Caco-2 (cell line): ENCODE measurements at regions of chr12 and their contacts with region 1.

Region 1: GRCh38 chr12:53220801-53221202 is 11.2 kb downstream of the RARG start:
- DNase-seq: peak; percentile 95
- H3K4me3 ChIP-seq: peak overlapping the region; percentile 45
- H3K4me3 Mint-ChIP-seq: peak overlapping the region; percentile 97
- H3K27ac Mint-ChIP-seq: peak overlapping the region; percentile 89
- H3K4me1 ChIP-seq: peaks cover 25% of the 10 kb centered on the region
- H3K4me1 Mint-ChIP-seq: peaks cover 53% of the 10 kb centered on the region
- H3K27me3 ChIP-seq: no peaks in the 10 kb centered on the region
- H3K27me3 Mint-ChIP-seq: no peaks in the 10 kb centered on the region
- CTCF ChIP-seq: no peak

Region 2: DNA sequence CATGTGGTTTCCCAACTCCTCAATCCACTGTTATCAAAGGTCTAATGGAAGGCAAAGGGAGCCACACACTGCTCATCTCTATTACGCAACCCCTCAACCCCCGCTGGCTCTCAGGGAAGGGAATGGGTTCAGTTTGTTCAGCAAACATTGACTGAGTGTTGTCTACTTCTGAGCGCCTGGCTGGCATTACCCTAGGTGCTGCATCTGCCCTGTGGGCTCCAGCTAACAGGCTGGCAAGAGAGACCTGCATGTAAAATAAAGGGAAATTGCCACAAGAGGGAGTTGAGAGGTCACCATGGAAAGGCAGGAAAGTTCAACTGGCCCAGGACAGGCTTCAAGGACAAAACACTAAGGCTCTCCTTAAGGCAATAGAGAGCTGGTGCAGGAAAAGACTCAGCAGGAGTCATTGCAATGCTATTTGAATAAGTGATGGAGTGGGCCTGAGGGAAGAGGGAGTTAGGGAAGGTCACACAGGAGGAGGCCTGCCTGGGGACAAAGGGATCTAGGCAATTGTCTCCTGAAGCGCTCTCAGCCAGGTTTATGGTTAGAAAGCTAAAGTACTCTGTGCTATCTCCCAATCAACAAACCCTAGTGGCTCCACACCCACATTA is 45.8 kb before region 1 on chr12:
- CTCF ChIA-PET with region 1: no interaction called
- POLR2A ChIA-PET with region 1: no interaction called
- intact Hi-C with region 1: no loop called
- DNase-seq: peak; percentile 63 to 73
- H3K4me3 ChIP-seq: no peak overlapping the region
- H3K4me3 Mint-ChIP-seq: peak overlapping the region; percentile 33
- H3K27ac Mint-ChIP-seq: peak overlapping the region; percentile 19
- H3K4me1 ChIP-seq: peaks cover 16% of the 10 kb centered on the region
- H3K4me1 Mint-ChIP-seq: peaks cover 19% of the 10 kb centered on the region
- H3K27me3 ChIP-seq: no peaks in the 10 kb centered on the region
- H3K27me3 Mint-ChIP-seq: no peaks in the 10 kb centered on the region
- CTCF ChIP-seq: peak; percentile 38 to 46

Region 3: DNA sequence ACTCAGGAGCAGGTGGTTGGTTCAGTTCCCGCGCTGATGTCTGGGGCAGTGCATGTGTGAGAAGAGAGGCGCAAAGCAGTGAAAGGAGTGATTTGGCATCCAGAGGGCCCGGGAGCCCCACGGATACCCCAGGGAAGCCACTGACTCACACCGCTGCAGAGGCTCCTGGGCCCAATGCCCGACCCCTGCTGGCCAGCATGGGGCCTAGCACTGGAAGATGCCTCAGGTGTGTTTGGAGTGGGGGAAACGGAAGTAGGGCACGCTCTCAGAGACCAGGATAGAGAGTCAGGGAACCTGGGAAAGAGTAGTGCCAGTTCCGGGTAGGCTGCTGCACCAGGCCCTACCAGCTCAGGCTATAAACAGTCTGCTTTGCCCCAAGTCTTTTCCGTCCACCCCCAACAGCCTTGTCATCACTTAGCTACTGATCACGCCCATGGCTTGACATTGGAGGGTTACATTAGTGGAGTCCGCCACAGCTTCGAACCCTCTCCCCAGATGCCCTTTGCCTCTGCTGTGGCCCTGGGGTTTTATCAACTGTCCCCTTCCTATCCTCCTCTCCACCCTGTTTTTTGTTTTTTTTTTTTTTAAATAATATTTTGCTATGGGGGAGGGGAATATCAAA is 30.6 kb before region 1 on chr12:
- CTCF ChIA-PET with region 1: no interaction called
- POLR2A ChIA-PET with region 1: no interaction called
- intact Hi-C with region 1: no loop called
- DNase-seq: peak; percentile 56 to 66
- H3K4me3 ChIP-seq: no peak overlapping the region
- H3K4me3 Mint-ChIP-seq: no peak overlapping the region
- H3K27ac Mint-ChIP-seq: no peak overlapping the region
- H3K4me1 ChIP-seq: no peaks in the 10 kb centered on the region
- H3K4me1 Mint-ChIP-seq: no peaks in the 10 kb centered on the region
- H3K27me3 ChIP-seq: no peaks in the 10 kb centered on the region
- H3K27me3 Mint-ChIP-seq: no peaks in the 10 kb centered on the region
- CTCF ChIP-seq: peak; percentile 69 to 89

Region 4: GRCh38 chr12:53251477-53252348 is 30.9 kb after region 1 on chr12:
- CTCF ChIA-PET with region 1: interaction called, 11 read pairs
- POLR2A ChIA-PET with region 1: interaction called, 3 read pairs
- intact Hi-C with region 1: loop called (anchors 1 kb)
- DNase-seq: peak; percentile 82 to 85
- H3K4me3 ChIP-seq: peak overlapping the region; percentile 81
- H3K4me3 Mint-ChIP-seq: peak overlapping the region; percentile 93
- H3K27ac Mint-ChIP-seq: peak overlapping the region; percentile 84
- H3K4me1 ChIP-seq: peaks cover 18% of the 10 kb centered on the region
- H3K4me1 Mint-ChIP-seq: peaks cover 22% of the 10 kb centered on the region
- H3K27me3 ChIP-seq: no peaks in the 10 kb centered on the region
- H3K27me3 Mint-ChIP-seq: no peaks in the 10 kb centered on the region
- CTCF ChIP-seq: peak in 1 of 2 experiments; percentile 60

Region 5: DNA sequence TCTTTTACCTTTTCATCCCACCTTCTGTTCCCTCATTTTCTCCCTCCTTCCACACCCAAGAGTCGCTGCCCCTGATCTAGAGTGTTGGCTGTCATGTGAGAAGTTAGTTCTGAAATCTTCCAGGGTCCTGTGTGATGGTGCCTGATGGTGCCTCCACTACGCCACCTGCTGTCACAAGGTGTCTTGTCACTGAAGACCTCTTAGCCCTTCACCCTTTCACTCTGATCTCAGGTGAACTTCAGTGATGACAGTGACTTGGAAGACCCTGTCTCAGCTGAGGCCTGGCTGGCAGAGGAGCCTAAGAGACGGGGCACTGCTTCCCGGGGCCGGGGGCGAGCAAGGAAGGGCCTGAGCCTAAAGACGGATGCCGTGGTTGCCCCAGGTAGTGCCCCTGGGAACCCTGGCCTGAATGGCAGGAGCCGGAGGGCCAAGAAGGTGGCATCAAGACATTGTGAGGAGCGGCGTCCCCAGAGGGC is 67.0 kb after region 1 on chr12:
- CTCF ChIA-PET with region 1: interaction called, 3 read pairs
- POLR2A ChIA-PET with region 1: interaction called, 3 read pairs
- intact Hi-C with region 1: loop called (anchors 2 kb)
- DNase-seq: peak; percentile 65 to 76
- H3K4me3 ChIP-seq: no peak overlapping the region
- H3K4me3 Mint-ChIP-seq: no peak overlapping the region
- H3K27ac Mint-ChIP-seq: no peak overlapping the region
- H3K4me1 ChIP-seq: no peaks in the 10 kb centered on the region
- H3K4me1 Mint-ChIP-seq: no peaks in the 10 kb centered on the region
- H3K27me3 ChIP-seq: no peaks in the 10 kb centered on the region
- H3K27me3 Mint-ChIP-seq: no peaks in the 10 kb centered on the region
- CTCF ChIP-seq: peak; percentile 72 to 76

Region 6: GRCh38 chr12:53308276-53308675 is 87.5 kb after region 1 on chr12:
- CTCF ChIA-PET with region 1: no interaction called
- POLR2A ChIA-PET with region 1: interaction called, 13 read pairs
- intact Hi-C with region 1: no loop called
- DNase-seq: no peak
- H3K4me3 ChIP-seq: no peak overlapping the region
- H3K4me3 Mint-ChIP-seq: no peak overlapping the region
- H3K27ac Mint-ChIP-seq: no peak overlapping the region
- H3K4me1 ChIP-seq: no peaks in the 10 kb centered on the region
- H3K4me1 Mint-ChIP-seq: no peaks in the 10 kb centered on the region
- H3K27me3 ChIP-seq: no peaks in the 10 kb centered on the region
- H3K27me3 Mint-ChIP-seq: no peaks in the 10 kb centered on the region
- CTCF ChIP-seq: no peak

Region 7: GRCh38 chr12:53391729-53392128 is 170.9 kb after region 1 on chr12:
- CTCF ChIA-PET with region 1: no interaction called
- POLR2A ChIA-PET with region 1: no interaction called
- intact Hi-C with region 1: no loop called
- DNase-seq: no peak
- H3K4me3 ChIP-seq: no peak overlapping the region
- H3K4me3 Mint-ChIP-seq: no peak overlapping the region
- H3K27ac Mint-ChIP-seq: no peak overlapping the region
- H3K4me1 ChIP-seq: no peaks in the 10 kb centered on the region
- H3K4me1 Mint-ChIP-seq: peaks cover 7% of the 10 kb centered on the region
- H3K27me3 ChIP-seq: no peaks in the 10 kb centered on the region
- H3K27me3 Mint-ChIP-seq: no peaks in the 10 kb centered on the region
- CTCF ChIP-seq: no peak